Activated T-helper 1 cell treated with anti-CD3 and anti-CD28 coated beads, Interleukin-12 subunit alpha, Interleukin-12 subunit beta, Interleukin-2, Interleukin-4 antibody, amounts not matched to agents 30 ng/mL and 10 ng/mL and 1 ng/mL, durations not matched to agents 14 hours and 24 hours and 36 hours (primary cell): ENCODE measurements at regions of chr6 and their contacts with region 1.

Region 1: GRCh38 chr6:118651282-118652050 is at the start of gene CEP85L:
- DNase-seq: peak; percentile 86
- H3K4me3 Mint-ChIP-seq: peak within 1 kb of the TSS; percentile 85
- H3K27ac Mint-ChIP-seq: peak within 1 kb of the TSS; percentile 92
- H3K4me1 Mint-ChIP-seq: peaks cover 52% of the 10 kb centered on the region
- H3K27me3 Mint-ChIP-seq: no peaks in the 10 kb centered on the region
- total RNA-seq, gene CEP85L: 50.9 and 51.4 TPM in 2 replicates

Region 2: DNA sequence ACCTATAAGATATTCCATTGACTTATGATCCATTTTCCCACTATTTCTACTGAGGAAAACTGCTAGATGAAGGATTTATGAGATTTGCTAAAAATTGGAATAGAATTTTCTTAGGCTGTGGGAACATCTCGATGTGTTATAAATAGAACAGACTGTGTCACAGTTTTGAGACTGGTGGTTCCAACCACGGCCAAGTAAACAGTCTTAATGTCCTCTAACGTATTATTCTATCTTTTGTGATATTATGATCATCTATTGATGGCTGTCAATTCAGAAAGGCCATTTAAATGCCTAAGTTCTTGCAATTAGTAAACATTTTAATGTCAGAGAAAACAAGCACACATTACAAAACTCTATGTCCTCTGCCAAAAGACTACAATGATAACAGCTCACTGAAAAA is 174.9 kb before region 1 on chr6:
- intact Hi-C with region 1: no loop called
- DNase-seq: no peak
- H3K4me3 Mint-ChIP-seq: no peak overlapping the region
- H3K27ac Mint-ChIP-seq: no peak overlapping the region
- H3K4me1 Mint-ChIP-seq: no peaks in the 10 kb centered on the region
- H3K27me3 Mint-ChIP-seq: no peaks in the 10 kb centered on the region

Region 3: DNA sequence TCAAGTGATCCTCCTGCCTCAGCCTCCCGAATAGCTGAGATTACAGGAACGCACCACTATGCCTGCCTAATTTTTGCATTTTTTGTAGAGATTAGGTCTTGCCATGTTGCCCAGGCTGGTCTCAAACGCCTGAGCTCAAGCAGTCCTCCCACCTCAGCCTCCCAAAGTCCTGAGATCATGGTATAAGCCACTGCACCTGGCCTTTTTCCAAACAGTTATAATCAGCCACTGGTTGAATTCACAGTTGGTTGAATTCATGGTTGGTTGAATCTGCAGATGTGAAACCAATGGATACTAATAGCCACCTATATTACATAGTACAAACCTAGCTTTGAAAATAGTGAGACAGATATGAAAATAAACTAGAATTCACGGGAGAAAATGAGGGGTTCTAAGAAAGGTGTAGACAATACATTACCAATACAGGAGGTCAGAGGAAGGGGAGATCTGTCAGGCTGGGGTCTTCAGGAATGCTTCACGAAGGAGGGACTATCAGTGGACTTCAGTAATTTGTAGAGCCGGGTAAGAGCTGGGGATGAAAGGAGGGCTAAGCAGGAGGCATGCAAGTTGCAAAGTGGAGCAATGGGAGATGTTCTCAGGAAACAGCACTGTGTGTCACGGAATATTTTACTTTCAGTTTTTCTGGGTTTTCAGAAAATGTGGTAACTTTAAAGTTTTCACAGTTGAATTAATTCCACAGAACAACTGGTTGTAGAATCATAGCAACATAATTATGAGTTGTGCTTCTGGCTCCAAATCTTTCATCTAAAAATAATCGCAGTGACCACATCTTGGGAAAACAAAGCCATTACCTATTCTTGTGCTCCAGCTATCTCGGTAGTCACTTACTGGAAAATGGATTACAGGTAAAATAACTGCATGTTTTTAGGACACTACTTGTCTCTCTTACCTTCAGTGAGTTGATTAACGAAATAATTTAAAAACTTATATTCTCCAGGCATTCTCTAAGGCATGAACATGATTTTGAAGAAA is 12.8 kb after region 1 on chr6:
- intact Hi-C with region 1: loop called (anchors 1 kb)
- DNase-seq: no peak
- H3K4me3 Mint-ChIP-seq: peak overlapping the region; percentile 86
- H3K27ac Mint-ChIP-seq: peak overlapping the region; percentile 89
- H3K4me1 Mint-ChIP-seq: peaks cover 61% of the 10 kb centered on the region
- H3K27me3 Mint-ChIP-seq: no peaks in the 10 kb centered on the region

Region 4: DNA sequence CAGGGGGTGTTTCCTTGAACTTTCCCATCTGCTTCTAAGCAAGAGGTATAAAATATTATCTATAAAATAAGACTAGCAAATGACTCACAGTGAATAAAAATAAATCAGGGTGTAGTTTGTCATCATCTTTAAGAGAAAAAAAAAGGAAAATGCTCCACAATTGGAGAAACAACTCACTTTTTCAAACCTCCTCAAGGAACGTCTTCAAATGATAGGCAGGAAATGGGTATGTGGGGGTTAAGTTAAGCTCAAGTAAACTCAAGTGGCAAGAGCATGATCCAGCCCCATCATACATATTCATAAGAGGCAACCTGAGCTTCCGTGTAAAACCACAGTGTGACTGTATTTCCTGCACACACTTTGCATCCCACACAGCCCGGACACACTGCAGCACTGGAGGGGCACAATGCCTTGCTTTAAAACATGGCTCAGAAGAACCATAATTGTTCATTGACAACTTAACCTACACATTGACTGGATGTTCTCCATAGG is 58.4 kb after region 1 on chr6:
- intact Hi-C with region 1: loop called (anchors 1 kb)
- DNase-seq: peak; percentile 77
- H3K4me3 Mint-ChIP-seq: peak overlapping the region; percentile 96
- H3K27ac Mint-ChIP-seq: peak overlapping the region; percentile 99
- H3K4me1 Mint-ChIP-seq: peaks cover 94% of the 10 kb centered on the region
- H3K27me3 Mint-ChIP-seq: peaks cover under 1% of the 10 kb centered on the region

Region 5: DNA sequence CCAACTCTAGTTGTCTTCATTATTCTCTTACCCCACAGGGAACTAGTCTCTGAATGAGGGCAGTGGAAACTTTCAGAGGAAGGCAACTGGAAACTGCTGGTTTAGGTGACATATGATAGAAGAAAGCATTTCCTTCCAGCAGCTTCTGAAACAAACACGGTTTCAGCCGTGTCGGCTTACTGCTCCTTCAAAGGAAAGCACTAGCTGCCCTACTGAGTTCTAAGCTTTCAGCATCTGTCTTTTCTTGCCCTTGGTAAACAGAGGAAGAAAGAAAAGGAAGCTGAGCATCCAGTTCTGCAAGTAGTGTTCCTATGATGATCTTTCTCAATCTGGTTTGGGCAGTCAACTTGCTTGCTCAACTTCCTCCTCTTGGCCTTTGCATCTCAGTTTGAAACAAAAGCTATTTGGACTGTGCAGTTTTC is 117.4 kb after region 1 on chr6:
- intact Hi-C with region 1: loop called (anchors 2 kb)
- DNase-seq: peak; percentile 31
- H3K4me3 Mint-ChIP-seq: peak overlapping the region; percentile 1
- H3K27ac Mint-ChIP-seq: peak overlapping the region; percentile 80
- H3K4me1 Mint-ChIP-seq: peaks cover 29% of the 10 kb centered on the region
- H3K27me3 Mint-ChIP-seq: no peaks in the 10 kb centered on the region

Region 6: GRCh38 chr6:118800394-118801071 is 149.1 kb after region 1 on chr6:
- intact Hi-C with region 1: loop called (anchors 1 kb)
- DNase-seq: peak; percentile 79
- H3K4me3 Mint-ChIP-seq: peak overlapping the region; percentile 17
- H3K27ac Mint-ChIP-seq: peak overlapping the region; percentile 15
- H3K4me1 Mint-ChIP-seq: peaks cover 35% of the 10 kb centered on the region
- H3K27me3 Mint-ChIP-seq: no peaks in the 10 kb centered on the region

Region 7: GRCh38 chr6:119078376-119079282 is 427.2 kb after region 1 on chr6 and contains the start of gene FAM184A:
- intact Hi-C with region 1: loop called (anchors 2 kb)
- DNase-seq: peak; percentile 73
- H3K4me3 Mint-ChIP-seq: peak within 1 kb of the TSS; percentile 92
- H3K27ac Mint-ChIP-seq: peak within 1 kb of the TSS; percentile 91
- H3K4me1 Mint-ChIP-seq: peaks cover 43% of the 10 kb centered on the region
- H3K27me3 Mint-ChIP-seq: peaks cover 8% of the 10 kb centered on the region
- total RNA-seq, gene FAM184A: 9.0 and 9.4 TPM in 2 replicates